Lower leg skin (tissue), 4 donors: ENCODE measurements at regions of chr13 and their contacts with region 1.

Region 1: DNA sequence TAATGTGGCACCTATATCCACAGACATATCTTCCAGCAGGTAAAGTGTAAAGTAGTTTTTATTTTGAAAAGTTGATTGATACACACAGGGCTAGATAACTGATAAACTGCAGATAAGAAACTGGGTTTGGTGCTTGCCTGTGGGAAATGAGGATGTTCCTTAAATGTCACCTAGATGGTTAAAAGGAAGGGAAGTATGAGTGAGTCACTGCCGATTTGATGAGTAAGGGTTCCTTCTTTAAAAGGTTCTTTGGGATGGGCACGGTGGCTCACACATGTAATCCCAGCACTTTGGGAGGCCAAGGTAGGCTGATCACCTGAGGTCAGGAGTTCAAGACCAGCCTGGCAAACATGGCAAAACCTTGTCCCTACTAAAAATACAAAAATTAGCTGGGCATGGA is 73.8 kb upstream of the FRY start:
- DNase-seq: no peak
- H3K4me3 ChIP-seq: no peak overlapping the region
- CTCF ChIP-seq: no peak
- POLR2A ChIP-seq: no peak

Region 2: GRCh38 chr13:31970231-31970930 is 12.6 kb after region 1 on chr13:
- intact Hi-C with region 1: loop called (anchors 1 kb)
- DNase-seq: no peak
- H3K4me3 ChIP-seq: no peak overlapping the region
- CTCF ChIP-seq: no peak
- POLR2A ChIP-seq: no peak

Region 3: DNA sequence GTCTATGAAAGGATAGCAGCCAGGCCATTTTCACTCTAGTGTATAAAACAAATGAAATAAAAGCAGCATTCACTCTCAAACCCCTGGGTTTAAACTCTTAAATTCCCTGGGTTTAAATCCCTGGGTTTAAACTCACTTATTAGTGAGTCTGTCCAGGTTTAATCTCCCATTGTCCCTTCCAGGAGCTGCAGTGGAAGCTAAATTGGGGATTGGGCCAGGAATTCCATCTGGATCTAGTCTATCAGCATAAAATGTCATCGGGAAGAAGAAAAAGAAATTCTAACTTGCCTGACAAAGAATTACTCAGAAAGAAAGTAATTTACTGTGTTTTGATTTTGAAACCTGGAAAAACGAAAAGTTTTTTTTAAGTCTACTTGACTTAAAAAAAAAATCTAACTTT is 128.6 kb after region 1 on chr13:
- intact Hi-C with region 1: no loop called
- DNase-seq: no peak
- H3K4me3 ChIP-seq: no peak overlapping the region
- CTCF ChIP-seq: no peak
- POLR2A ChIP-seq: no peak